ENCODE measurements at regions of chr11 and their contacts with region 1.

Region 1: GRCh38 chr11:10735481-10736475 is 15.3 kb upstream of the CTR9 start:
- DNase-seq: peak; percentile 92
- H3K4me3 ChIP-seq: no peak overlapping the region
- CTCF ChIP-seq: peak; percentile 98

Region 2: DNA sequence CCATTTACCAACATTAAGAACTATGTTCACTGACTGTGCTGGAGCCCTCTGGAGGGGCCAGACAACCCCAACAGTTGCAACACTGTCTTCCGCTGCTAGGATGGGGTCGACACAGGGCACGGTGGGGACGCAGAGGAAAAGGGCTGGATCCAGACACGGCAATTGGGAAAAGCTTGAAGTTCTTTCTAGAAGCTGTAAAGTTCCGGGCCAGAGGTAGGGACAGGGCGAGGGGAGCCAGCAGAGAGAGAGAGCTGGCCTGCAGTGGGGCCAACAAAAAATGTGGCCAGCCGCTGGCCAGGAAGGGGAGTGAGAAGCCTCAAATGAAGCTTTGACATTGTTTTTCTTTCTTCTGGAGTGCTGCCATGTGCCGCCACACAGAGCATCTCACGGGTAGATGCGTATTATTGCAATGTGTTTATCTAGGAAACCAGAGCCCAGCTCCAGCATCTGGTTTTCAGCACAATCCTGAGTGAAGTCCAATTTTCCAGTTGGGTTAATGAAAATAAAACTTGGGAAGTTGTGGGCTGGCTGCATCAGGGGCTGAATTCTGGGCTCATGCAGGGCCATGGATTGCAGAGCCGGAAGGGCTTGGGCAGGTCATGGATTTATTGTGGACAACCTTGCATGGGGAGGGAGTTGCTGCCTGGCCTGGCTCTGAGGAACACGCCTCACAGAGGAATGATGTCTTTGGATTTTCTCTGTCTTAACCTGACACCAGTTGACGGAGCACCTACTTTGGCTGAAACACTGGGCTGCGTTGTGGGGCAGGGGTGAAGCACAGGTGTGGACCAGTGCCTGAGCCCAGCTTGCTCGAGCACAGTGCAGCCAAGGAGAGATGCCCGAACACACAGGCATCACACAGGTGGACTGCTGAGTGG is 348.3 kb before region 1 on chr11:
- in situ Hi-C with region 1: loop called (anchors 25 kb)
- DNase-seq: peak; percentile 99
- H3K4me3 ChIP-seq: no peak overlapping the region
- CTCF ChIP-seq: peak; percentile 21